ENCODE measurements at regions of chr10 and their contacts with region 1.

Region 1: DNA sequence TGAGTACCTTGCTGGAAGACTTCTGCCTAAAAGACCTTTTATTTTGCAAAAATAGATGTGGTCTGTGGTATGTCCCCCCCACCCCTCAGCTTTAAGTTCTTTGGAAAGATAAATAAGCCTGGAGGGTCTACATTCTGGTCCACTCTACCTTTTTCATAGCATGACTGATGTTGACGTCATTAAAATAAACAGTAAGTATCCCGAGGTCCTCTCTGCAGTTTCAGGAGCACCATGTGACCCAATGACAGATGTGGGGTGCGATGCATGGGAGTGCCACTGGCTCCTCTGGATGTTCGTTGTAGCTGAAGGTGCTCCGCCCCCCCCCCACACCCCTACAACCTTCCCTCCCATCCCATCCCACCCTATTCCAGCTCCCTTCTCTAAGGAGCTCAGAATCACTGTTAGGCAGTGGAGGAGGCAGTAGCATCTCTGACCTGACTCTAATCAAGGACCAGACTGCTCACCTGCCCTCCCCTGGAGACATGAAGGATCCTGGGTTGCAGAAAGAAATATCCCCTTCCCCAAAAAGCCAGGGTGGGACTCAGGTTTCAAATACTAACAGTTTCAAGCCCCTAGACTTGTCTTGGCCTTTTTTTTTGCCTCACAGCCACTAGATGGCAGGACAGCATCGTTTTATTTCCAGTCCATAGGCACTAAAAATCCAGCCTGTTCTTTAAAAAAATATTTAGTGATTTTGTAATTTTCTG is 25.1 kb downstream of the CASP7 start:
- DNase-seq: no peak
- H3K4me3 ChIP-seq: no peak overlapping the region
- H3K27ac ChIP-seq: no peak overlapping the region
- H3K4me1 ChIP-seq: no peaks in the 10 kb centered on the region
- H3K27me3 ChIP-seq: no peaks in the 10 kb centered on the region
- CTCF ChIP-seq: peak; percentile 76

Region 2: GRCh38 chr10:113585949-113586348 is 118.8 kb before region 1 on chr10:
- CTCF ChIA-PET with region 1: no interaction called
- POLR2A ChIA-PET with region 1: no interaction called
- intact Hi-C with region 1: no loop called
- DNase-seq: no peak
- H3K4me3 ChIP-seq: no peak overlapping the region
- H3K27ac ChIP-seq: no peak overlapping the region
- H3K4me1 ChIP-seq: no peaks in the 10 kb centered on the region
- H3K27me3 ChIP-seq: no peaks in the 10 kb centered on the region
- CTCF ChIP-seq: no peak

Region 3: GRCh38 chr10:113802997-113803396 is 98.2 kb after region 1 on chr10:
- CTCF ChIA-PET with region 1: no interaction called
- POLR2A ChIA-PET with region 1: no interaction called
- intact Hi-C with region 1: loop called (anchors 2 kb)
- DNase-seq: no peak
- H3K4me3 ChIP-seq: no peak overlapping the region
- H3K27ac ChIP-seq: no peak overlapping the region
- H3K4me1 ChIP-seq: no peaks in the 10 kb centered on the region
- H3K27me3 ChIP-seq: no peaks in the 10 kb centered on the region
- CTCF ChIP-seq: no peak

Region 4: DNA sequence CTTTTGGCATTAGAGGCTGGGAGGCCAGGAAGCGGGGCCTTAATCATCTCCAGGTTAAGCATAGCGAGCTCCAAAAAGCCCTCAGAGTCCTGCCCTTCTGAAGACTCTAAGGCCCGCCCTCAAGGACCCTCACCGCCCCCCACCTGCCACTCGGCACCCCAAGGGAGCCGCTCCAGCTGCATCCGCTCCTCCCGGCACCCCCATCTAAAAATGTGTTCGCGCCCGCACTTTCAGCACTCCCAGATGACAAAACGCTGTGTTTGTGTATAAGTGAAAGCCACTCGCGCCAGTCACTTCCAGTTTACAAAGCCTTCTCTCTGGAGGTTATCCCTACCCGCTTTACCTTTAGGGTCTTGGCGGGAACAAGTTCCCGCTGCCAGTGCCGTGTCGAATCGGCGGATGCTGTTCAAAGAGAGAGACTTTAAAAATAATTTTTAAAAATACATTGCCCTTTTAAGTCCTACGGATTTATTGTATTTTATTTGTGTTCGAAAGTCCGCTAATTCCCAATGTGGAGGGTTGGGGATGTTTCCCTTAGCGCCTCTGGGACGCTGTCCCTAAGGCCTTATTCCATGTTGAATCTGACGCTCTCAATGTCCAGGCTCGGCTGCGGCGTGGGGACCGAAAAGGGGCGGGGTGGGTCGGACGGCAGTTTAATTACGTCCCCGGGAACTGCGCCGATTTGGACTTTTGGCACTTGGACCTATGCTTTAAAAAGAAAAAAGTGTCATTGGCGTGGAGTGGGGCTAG is 149.4 kb after region 1 on chr10 and contains the starts of genes DCLRE1A and NHLRC2:
- CTCF ChIA-PET with region 1: no interaction called
- POLR2A ChIA-PET with region 1: no interaction called
- intact Hi-C with region 1: loop called (anchors 10 kb)
- DNase-seq: peak; percentile 44 to 52
- H3K4me3 ChIP-seq: peak within 1 kb of the TSS; percentile 84
- H3K27ac ChIP-seq: peak within 1 kb of the TSS; percentile 65
- H3K4me1 ChIP-seq: peaks cover 28% of the 10 kb centered on the region
- H3K27me3 ChIP-seq: no peaks in the 10 kb centered on the region
- CTCF ChIP-seq: no peak
- total RNA-seq, gene DCLRE1A: 6.1 and 7.7 TPM in 2 replicates
- total RNA-seq, gene NHLRC2: 22.5 and 22.8 TPM in 2 replicates